ENCODE measurements at regions of chr12 and their contacts with region 1.

Region 1: GRCh38 chr12:53213348-53213747 is 6.3 kb upstream of the ITGB7 start:
- DNase-seq: no peak
- H3K4me3 ChIP-seq: no peak overlapping the region
- H3K27ac ChIP-seq: no peak overlapping the region
- H3K27me3 ChIP-seq: no peaks in the 10 kb centered on the region
- CTCF ChIP-seq: peak; percentile 92

Region 2: DNA sequence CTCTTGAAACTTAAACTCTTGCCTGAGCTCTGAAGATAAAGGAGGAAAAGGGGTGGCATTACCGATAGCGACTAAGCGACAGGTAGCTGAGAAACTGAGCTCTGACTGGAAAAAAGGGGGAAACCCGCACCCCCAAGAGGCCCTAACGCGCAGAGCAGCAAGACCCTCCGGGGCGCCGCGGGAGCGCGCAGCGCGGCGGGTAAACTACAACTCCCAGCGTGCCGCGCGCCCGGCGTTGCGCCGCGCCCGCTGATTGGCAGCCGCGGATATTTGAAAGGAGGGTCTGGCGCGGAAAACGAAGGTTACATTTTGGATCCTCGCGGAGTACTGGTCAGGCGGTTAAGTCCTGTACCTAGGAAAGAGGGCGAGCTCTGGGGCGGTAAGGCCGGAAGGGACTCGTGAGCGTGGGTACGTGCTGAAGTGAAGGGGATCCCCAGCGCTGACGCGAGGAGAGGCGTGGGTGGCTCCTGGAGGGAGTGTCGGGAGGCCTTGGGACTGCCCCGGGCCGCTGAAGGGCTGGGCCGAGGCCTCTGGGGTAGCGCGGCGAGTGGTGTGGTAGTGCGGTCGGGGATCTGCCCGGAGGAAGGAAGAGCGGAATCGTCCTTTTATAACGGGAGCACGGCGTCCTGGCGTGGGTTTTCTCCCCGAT is 54.8 kb after region 1 on chr12 and contains the start of gene ESPL1:
- CTCF ChIA-PET with region 1: interaction called, 40 read pairs
- POLR2A ChIA-PET with region 1: no interaction called
- DNase-seq: no peak
- H3K4me3 ChIP-seq: peak within 1 kb of the TSS; percentile 95
- H3K27ac ChIP-seq: peak within 1 kb of the TSS; percentile 61
- H3K27me3 ChIP-seq: no peaks in the 10 kb centered on the region
- CTCF ChIP-seq: peak; percentile 24; the same call in 1 of the 2 replicates
- polyA plus RNA-seq, gene ESPL1: 1.6 and 2.1 TPM in 2 replicates

Region 3: GRCh38 chr12:53295070-53295890 is 81.9 kb after region 1 on chr12 and contains the start of gene PFDN5:
- CTCF ChIA-PET with region 1: interaction called, 183 read pairs
- POLR2A ChIA-PET with region 1: interaction called, 4 read pairs
- DNase-seq: peak; percentile 73
- H3K4me3 ChIP-seq: peak within 1 kb of the TSS; percentile 99
- H3K27ac ChIP-seq: peak within 1 kb of the TSS; percentile 73
- H3K27me3 ChIP-seq: no peaks in the 10 kb centered on the region
- CTCF ChIP-seq: peak; percentile 11; the same call in 1 of the 2 replicates
- polyA plus RNA-seq, gene PFDN5: 970 and 991 TPM in 2 replicates

Region 4: DNA sequence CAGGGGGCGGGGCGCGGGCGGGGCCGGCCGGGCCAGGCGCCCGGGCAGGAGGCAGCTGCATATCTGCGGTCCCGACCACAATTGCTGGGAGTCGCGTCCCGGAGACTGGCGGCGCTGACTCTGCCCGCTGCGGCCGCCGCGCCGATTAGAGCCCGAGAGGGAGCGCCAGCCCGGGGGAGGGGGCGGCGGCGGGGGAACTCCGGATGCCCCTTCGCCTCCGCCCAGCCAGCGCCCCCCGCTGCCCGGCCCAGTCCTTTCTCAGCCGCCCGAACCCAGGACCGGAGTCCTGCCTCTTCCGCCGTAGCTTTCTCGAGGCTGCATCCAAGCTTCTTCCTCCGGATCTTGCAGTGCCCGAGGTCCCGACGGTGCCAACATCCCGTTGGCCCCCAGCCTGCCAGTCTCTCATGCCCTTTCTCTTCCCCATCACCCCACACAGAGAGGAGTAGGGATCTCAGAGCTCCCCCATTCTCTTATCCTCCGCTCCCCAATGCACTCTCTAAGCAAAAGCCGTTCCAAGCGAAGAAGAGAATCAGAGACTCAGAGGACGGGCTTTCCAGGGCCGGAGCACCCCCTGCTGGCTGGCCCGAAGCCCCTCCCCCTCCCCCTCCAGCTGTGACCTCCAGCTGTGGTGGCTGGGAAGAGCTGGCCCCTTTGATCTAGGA is 131.6 kb after region 1 on chr12:
- CTCF ChIA-PET with region 1: interaction called, 37 read pairs
- POLR2A ChIA-PET with region 1: interaction called, 3 read pairs
- DNase-seq: peak; percentile 33
- H3K4me3 ChIP-seq: peak overlapping the region; percentile 76
- H3K27ac ChIP-seq: peak overlapping the region; percentile 11
- H3K27me3 ChIP-seq: peaks cover 8% of the 10 kb centered on the region
- CTCF ChIP-seq: peak; percentile 88

Measured in AG04450 (cell line).